Head of caudate nucleus (tissue), 42 donors: ENCODE measurements at regions of chr2 and their contacts with region 1.

Region 1: GRCh38 chr2:196639180-196640030 is at the start of gene CCDC150:
- DNase-seq: peak; percentile 88 to 98 (median 95)

Region 2: GRCh38 chr2:196291873-196292800 is 347.3 kb before region 1 on chr2:
- intact Hi-C with region 1: loop called (anchors 5 kb)
- DNase-seq: no peak

Region 3: DNA sequence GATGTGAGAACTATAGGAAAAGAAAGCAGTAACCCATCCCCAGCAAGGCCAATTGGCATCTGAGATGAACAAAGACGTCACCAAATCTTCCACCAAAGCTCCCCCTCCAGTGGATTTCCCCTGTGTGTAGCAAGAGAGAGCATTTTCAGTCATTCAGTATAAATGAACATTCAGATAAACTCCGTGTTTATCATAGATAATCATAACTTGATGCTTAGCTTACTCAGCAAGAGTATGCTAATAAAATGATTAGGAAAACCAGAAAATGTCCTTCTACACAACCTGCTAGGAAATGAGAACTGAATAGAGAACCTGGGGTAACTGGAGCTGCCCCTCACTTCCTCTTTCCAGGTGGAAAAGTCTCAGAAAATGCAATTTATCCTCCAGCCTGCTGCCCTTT is 197.9 kb before region 1 on chr2:
- intact Hi-C with region 1: no loop called
- DNase-seq: no peak

Region 4: DNA sequence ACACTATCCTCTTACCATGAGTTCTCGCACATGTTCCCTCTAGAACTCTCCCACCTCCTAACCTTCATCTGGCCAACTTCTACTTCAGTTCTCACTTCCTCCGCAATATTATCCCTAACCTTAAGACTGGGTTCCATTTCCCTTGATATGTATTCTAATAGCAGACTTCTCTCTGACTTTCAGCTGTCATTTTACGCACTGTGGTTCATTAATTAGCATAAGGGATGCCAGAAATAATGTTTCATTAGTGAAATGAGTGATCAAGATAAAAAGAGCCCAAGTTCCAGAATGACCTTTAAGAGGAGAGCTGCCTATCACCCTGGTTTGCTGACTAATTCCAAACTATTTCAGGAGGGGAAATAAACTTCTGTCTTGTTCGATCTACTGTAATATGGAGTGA is 108.5 kb before region 1 on chr2:
- intact Hi-C with region 1: loop called (anchors 5 kb)
- DNase-seq: no peak

Region 5: GRCh38 chr2:196597531-196597930 is 41.9 kb before region 1 on chr2:
- intact Hi-C with region 1: loop called (anchors 5 kb)
- DNase-seq: no peak

Region 6: GRCh38 chr2:196696423-196697079 is 57.1 kb after region 1 on chr2:
- intact Hi-C with region 1: no loop called
- DNase-seq: no peak

Region 7: GRCh38 chr2:196725882-196726281 is 86.5 kb after region 1 on chr2:
- intact Hi-C with region 1: no loop called
- DNase-seq: no peak